Activated T-helper 1 cell treated with anti-CD3 and anti-CD28 coated beads, Interleukin-12 subunit alpha, Interleukin-12 subunit beta, Interleukin-2, Interleukin-4 antibody, amounts not matched to agents 30 ng/mL and 10 ng/mL and 1 ng/mL, durations not matched to agents 14 hours and 24 hours and 36 hours (primary cell): ENCODE measurements at regions of chr3 and their contacts with region 1.

Region 1: DNA sequence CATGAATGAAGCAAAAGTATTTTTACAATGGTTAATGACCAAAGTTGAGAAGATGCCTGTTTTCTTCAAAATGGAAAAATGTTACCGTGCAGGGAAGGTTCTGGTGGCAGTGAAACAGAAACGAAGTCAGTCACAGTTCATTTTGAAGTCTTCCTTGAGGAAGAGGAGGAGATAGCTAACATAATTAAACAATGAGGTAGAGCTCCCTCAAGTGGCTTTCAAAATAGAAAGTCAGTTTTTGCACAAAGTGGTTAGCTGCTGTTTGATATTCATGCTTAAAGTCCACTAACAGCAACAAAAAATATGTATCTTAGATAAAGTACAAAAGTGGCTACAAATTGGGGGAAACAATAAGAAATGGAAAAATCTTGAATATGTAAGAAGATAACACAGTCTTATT is 87.3 kb downstream of the TFG start:
- DNase-seq: no peak
- H3K4me3 Mint-ChIP-seq: no peak overlapping the region
- H3K27ac Mint-ChIP-seq: no peak overlapping the region
- H3K4me1 Mint-ChIP-seq: peaks cover 5% of the 10 kb centered on the region
- H3K27me3 Mint-ChIP-seq: peaks cover 4% of the 10 kb centered on the region

Region 2: DNA sequence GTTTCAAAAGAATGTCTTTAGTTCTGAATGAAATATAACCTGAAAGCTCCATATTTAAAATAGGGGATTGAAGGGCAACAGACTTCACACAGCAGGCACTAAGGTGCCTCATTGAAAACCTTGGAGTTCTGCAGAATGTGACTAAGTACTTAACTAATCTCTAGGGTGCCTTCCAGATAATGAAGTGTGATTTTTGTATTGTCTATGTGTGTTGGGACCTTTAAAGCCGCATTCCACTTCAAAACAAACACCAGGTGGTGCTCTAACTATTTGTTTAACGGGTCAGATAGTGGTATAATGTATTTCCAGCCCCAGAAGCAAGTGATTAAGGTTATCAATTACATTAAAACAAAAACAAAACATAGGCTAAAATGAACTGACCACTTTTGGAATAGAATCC is 59.2 kb before region 1 on chr3:
- intact Hi-C with region 1: loop called (anchors 5 kb)
- DNase-seq: no peak
- H3K4me3 Mint-ChIP-seq: no peak overlapping the region
- H3K27ac Mint-ChIP-seq: no peak overlapping the region
- H3K4me1 Mint-ChIP-seq: peaks cover 32% of the 10 kb centered on the region
- H3K27me3 Mint-ChIP-seq: no peaks in the 10 kb centered on the region

Region 3: DNA sequence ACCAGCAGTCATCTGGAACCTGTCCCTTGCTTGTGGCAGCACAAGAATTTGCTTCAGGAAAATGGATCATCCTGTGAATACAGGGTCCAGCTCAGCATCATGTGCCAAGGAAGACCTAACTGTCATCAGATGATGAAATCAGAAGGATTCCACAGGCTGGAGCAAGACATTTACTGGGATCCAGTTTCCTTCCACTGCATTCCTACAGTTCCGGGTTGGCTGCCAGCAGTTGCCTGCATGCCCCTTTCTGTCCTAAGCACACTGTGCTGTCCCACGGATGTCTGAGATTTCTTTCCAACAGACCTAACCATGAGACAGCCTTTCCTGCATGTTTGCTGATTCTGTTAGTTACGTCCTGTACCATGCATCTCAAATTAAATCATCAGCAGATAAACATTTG is 383.1 kb after region 1 on chr3:
- intact Hi-C with region 1: no loop called
- DNase-seq: no peak
- H3K4me3 Mint-ChIP-seq: no peak overlapping the region
- H3K27ac Mint-ChIP-seq: no peak overlapping the region
- H3K4me1 Mint-ChIP-seq: no peaks in the 10 kb centered on the region
- H3K27me3 Mint-ChIP-seq: no peaks in the 10 kb centered on the region